Activated CD4-positive, alpha-beta memory T cell treated with anti-CD3 and anti-CD28 coated beads for 36 hours (primary cell): ENCODE measurements at regions of chr3 and their contacts with region 1.

Region 1: GRCh38 chr3:125202197-125202596 is 10.4 kb downstream of the SLC12A8 start:
- DNase-seq: peak; percentile 24
- H3K4me3 Mint-ChIP-seq: no peak overlapping the region
- H3K27ac Mint-ChIP-seq: no peak overlapping the region
- H3K4me1 Mint-ChIP-seq: peaks cover 6% of the 10 kb centered on the region
- H3K27me3 Mint-ChIP-seq: peaks cover 12% of the 10 kb centered on the region

Region 2: DNA sequence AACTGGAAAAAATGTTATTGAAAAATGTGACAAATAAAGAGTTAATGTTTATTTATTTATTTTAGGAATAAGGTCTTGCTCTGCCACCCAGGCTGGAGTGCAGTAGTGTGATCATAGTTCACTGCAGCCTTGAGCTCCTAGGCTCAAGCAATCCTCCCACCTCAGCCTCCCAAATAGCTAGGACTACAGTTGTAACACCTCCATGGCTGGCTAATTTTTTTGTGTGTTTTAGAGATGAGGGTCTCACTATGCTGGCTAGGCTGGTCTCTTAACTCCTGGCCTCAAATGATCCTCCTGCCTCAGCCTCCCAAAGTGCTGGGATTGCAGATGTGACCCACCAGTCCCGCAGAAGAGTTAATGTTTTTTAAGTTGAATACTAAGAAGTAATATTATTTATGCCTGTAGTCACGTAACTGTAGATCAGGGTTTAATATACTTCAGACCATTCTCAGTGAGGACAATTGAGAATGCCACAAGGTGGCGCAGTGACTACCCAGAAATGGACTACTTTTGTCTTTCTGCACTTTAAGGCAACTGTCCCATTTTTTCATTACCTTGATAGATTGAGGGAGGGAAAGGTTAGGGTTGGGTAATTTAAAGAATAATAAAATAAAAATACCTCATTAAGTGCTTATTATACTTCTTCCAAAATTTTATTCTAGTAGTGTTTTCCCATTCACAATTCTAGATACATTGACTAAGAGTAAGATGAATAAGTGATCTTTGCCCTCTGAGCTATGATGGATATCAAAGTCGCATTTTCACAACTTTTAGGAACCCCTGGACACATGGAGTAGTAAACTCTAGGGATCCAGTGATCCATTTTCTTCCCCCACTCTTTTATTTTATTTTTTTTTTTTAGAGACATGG is 273.6 kb before region 1 on chr3:
- CTCF ChIA-PET with region 1: interaction called, 5 read pairs
- POLR2A ChIA-PET with region 1: no interaction called
- intact Hi-C with region 1: loop called (anchors 1 kb)
- DNase-seq: peak; percentile 70
- H3K4me3 Mint-ChIP-seq: no peak overlapping the region
- H3K27ac Mint-ChIP-seq: no peak overlapping the region
- H3K4me1 Mint-ChIP-seq: no peaks in the 10 kb centered on the region
- H3K27me3 Mint-ChIP-seq: peaks cover 3% of the 10 kb centered on the region

Region 3: DNA sequence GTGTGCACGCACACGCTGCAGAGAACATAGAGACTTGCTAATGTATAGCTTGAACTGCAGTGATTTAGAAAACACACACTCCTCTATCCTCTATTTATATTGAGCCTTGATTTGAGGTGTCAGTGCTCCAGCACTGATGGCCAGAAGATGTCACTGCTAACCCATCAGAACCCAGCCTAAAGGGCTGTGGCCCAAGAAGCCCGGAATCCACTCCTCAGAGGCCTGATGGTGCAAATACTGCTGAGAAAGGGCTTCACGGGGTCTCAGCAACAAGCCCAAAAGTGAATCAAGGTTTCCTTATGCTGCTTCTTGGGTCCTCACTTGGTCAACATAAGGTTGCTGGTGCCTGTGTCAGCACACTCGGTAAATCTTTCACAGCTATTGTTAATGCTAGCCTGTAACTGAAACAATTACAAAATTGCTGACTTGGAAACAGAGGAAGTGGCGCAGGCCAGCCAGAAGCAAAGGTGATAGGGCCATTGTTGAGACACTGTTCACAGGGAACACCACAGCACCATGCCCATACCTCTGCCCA is 206.7 kb before region 1 on chr3:
- CTCF ChIA-PET with region 1: interaction called, 4 read pairs
- POLR2A ChIA-PET with region 1: no interaction called
- intact Hi-C with region 1: loop called (anchors 1 kb)
- DNase-seq: peak; percentile 61
- H3K4me3 Mint-ChIP-seq: no peak overlapping the region
- H3K27ac Mint-ChIP-seq: no peak overlapping the region
- H3K4me1 Mint-ChIP-seq: no peaks in the 10 kb centered on the region
- H3K27me3 Mint-ChIP-seq: no peaks in the 10 kb centered on the region

Region 4: DNA sequence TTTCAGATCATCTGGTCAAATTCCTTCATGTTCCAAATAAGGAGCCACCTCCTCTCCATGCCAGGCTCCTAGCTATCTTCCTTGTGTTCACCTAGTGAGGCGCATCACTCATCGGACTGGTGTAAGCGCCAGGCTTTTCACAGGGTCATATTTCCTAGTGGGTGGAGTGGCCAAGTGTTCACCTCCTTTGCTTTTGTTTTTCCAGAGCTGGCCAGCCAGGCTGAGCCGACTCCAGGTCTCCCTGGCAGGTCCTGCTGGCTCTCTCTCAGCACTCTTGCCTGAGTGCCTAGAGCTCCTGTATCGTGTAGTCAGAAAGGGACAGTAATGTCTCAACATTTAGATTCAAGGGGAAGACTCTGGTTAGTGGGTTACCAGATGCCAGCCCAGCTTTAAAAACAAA is 177.4 kb before region 1 on chr3:
- CTCF ChIA-PET with region 1: no interaction called
- POLR2A ChIA-PET with region 1: no interaction called
- intact Hi-C with region 1: no loop called
- DNase-seq: no peak
- H3K4me3 Mint-ChIP-seq: no peak overlapping the region
- H3K27ac Mint-ChIP-seq: no peak overlapping the region
- H3K4me1 Mint-ChIP-seq: peaks cover 39% of the 10 kb centered on the region
- H3K27me3 Mint-ChIP-seq: no peaks in the 10 kb centered on the region

Region 5: DNA sequence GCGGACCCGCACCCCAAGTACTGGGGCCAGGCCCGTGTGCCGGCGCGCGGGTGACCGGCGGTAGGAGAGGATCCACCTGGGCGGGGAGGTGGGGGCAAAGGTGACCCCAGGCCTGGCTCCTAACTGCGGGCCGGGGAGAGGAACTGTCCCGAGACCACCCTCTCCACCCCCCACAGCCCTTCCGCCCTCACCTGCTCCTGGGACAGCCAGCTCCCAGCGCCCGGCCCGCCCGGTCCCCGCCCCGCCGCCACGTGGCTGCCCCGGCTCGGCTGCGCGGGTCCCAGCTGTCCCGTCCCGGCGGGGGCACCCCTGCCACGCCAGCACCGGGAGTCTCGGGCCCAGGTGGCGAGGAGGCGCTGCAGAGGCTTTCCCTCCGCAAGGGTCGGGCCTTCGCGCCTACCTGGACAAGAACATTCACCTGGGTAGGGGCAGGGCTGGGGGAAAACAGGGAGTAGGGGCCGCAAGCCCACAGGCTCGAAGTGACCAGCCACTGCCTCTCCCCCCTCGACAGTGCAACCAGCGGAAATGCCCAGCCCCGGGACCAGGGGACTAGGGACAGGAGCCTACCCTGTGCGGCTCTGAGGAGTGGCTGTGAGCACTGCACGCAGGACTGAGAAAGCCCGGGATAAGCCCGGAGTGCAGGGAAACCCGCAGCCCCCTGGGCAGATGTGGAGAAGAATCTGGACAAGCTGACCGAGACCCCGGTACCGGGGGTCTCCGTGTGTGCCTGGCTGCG is 10.5 kb after region 1 on chr3 and contains the start of gene SLC12A8:
- CTCF ChIA-PET with region 1: no interaction called
- POLR2A ChIA-PET with region 1: no interaction called
- intact Hi-C with region 1: no loop called
- DNase-seq: no peak
- H3K4me3 Mint-ChIP-seq: no peak within 1 kb of the TSS
- H3K27ac Mint-ChIP-seq: no peak within 1 kb of the TSS
- H3K4me1 Mint-ChIP-seq: peaks cover 16% of the 10 kb centered on the region
- H3K27me3 Mint-ChIP-seq: peaks cover 45% of the 10 kb centered on the region
- total RNA-seq, gene SLC12A8: 0.48 to 1.00 TPM